Prostate gland (tissue), 2 donors: ENCODE measurements at regions of chr6 and their contacts with region 1.

Region 1: DNA sequence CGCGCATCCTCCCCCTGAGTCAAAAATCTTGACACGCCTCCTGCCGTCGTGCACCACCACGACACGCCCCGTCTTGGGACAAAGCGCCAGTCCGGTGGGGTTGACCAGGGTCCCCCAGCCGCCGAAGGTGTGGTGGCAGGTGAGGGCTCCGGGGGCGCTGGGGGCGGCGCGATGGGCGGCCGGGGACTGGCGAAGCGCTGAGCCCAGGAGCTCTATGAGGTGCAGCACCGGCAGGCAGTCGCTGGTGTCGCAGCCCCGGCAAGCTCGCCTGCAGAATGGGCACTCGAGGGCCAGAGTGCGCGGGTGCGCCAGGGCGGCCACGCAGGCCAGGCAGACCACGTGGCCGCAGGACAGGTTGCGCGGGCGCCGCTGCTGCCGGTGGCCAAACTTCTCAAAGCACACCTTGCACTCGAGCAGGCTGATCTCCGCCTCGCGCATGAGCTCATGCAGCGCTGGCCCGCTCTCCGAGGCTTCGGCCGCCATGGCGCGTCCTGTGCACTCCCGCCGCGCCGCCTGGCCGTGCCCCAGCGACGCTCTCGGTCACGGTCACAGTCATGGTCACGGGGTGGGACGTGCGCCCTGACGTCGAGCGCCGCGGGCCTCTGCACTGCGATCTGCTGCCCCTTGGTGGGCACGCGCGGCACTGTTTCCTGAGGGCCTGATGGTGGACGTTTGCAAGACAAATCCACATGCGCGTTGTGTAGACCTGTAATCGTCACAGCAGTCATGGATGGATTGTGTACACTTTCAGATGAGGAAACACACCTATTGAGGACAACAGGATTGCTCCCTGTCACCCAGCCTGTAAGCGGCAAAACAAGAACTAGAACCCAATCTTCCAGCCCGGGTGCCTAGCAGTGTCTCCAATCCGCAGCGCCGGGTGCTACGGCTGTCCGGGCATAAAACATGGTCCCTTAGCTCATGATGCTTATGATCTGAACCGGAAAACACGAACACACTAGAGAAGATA is at the start of gene NHLRC1:
- DNase-seq: peak; percentile 82
- H3K4me3 ChIP-seq: peak within 1 kb of the TSS; percentile 37 to 41
- H3K27ac ChIP-seq: peak within 1 kb of the TSS; percentile 3 to 35
- H3K4me1 ChIP-seq: no peaks in the 10 kb centered on the region
- H3K27me3 ChIP-seq: no peaks in the 10 kb centered on the region
- CTCF ChIP-seq: peak; percentile 87 to 98 (median 96)
- POLR2A ChIP-seq: peak; percentile 53
- total RNA-seq, gene NHLRC1: 2.7 to 4.8 TPM

Region 2: GRCh38 chr6:17599885-17600526 is 522.4 kb before region 1 on chr6 and contains the start of gene FAM8A1:
- intact Hi-C with region 1: loop called (anchors 10 kb)
- DNase-seq: peak; percentile 95
- H3K4me3 ChIP-seq: peak within 1 kb of the TSS; percentile 80 to 96
- H3K27ac ChIP-seq: peak within 1 kb of the TSS; percentile 93 to 98
- H3K4me1 ChIP-seq: no peaks in the 10 kb centered on the region
- H3K27me3 ChIP-seq: no peaks in the 10 kb centered on the region
- CTCF ChIP-seq: peak; percentile 51 to 96 (median 75)
- POLR2A ChIP-seq: peak; percentile 80
- total RNA-seq, gene FAM8A1: 23.7 to 39.4 TPM

Region 3: GRCh38 chr6:17831135-17831534 is 291.3 kb before region 1 on chr6:
- intact Hi-C with region 1: loop called (anchors 10 kb)
- DNase-seq: no peak
- H3K4me3 ChIP-seq: no peak overlapping the region
- H3K27ac ChIP-seq: no peak overlapping the region
- H3K4me1 ChIP-seq: no peaks in the 10 kb centered on the region
- H3K27me3 ChIP-seq: no peaks in the 10 kb centered on the region
- CTCF ChIP-seq: no peak
- POLR2A ChIP-seq: no peak

Region 4: DNA sequence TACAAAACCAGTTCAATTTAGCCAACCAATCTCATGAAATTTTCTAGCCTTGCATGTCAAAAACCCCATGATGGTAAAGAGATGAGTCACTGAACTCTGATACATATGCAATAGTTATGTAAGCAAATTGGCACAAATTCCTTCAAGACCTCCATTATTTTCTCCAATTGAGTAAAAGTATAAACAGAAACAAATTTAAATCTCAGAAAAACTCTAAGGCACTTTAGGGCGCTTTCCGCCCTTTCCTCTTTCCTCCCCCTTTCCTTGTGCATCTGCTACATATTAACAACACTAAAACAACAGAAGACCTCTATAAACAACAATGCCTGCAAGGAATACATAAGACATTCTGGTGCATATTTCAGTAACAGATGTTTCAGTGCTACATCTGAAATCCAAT is 183.5 kb before region 1 on chr6:
- intact Hi-C with region 1: no loop called
- DNase-seq: no peak
- H3K4me3 ChIP-seq: no peak overlapping the region
- H3K27ac ChIP-seq: no peak overlapping the region
- H3K4me1 ChIP-seq: peaks cover 6% of the 10 kb centered on the region
- H3K27me3 ChIP-seq: no peaks in the 10 kb centered on the region
- CTCF ChIP-seq: no peak
- POLR2A ChIP-seq: no peak